ENCODE measurements at regions of chr4 and their contacts with region 1.

Region 1: DNA sequence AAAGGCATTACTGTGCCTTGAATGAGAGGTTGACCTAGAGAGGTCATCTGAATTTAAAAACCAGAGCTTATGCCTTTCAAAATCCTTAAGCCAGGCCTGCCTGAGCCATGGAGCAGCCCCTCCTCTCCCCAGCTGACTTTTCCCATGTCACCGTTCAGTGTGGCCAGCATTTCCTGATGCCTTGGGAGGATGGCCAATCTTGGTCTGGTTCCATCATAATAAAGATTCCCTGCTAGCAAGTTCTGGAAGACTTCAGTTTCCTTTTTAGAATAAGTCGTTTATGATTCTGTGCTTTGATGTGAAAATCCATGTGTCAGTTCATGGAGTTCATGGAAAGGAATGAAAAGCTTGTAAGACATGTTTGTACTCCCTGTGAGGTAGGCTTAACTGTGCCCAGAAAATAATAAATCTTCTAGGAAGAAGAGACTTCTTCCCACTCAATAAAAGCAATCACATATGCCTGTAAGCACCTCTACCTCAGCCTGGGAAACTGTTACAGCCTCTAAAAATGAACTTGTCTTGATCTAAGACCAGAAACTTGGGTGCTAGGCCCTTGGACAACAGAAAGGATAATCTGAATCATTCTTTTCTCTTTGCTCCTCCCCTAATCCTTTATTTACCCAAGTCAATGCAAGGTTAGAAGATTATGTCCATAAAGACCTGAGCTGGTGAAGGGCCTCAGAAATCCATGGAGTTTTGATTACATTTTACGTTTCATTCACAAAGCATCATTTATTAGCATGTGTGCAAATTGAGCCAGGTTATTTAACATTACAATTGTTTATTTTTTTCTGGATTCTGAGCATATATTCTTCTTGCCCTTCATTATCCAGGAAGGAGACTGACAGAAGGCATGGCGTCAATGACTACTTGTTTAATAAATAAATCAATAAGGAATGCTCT is 84.0 kb upstream of the TBC1D9 start:
- DNase-seq: no peak
- H3K4me3 ChIP-seq: no peak overlapping the region
- H3K27ac ChIP-seq: no peak overlapping the region
- H3K4me1 ChIP-seq: no peaks in the 10 kb centered on the region
- H3K27me3 ChIP-seq: no peaks in the 10 kb centered on the region
- CTCF ChIP-seq: no peak
- POLR2A ChIP-seq: no peak

Region 2: GRCh38 chr4:140359562-140360427 is 480.3 kb before region 1 on chr4:
- intact Hi-C with region 1: loop called (anchors 10 kb)
- DNase-seq: peak; percentile 64 to 80
- H3K4me3 ChIP-seq: no peak overlapping the region
- H3K27ac ChIP-seq: no peak overlapping the region
- H3K4me1 ChIP-seq: no peaks in the 10 kb centered on the region
- H3K27me3 ChIP-seq: no peaks in the 10 kb centered on the region
- CTCF ChIP-seq: peak; percentile 38 to 73 (median 56)
- POLR2A ChIP-seq: no peak

Measured in uterus (tissue), 4 donors.